ENCODE measurements at regions of chr11 and their contacts with region 1.

Region 1: GRCh38 chr11:20374746-20375300 is 11.3 kb downstream of the HTATIP2 start:
- DNase-seq: no peak
- H3K4me3 ChIP-seq: no peak overlapping the region
- H3K27ac ChIP-seq: no peak overlapping the region
- H3K4me1 ChIP-seq: no peaks in the 10 kb centered on the region
- H3K27me3 ChIP-seq: no peaks in the 10 kb centered on the region
- CTCF ChIP-seq: no peak
- EP300 ChIP-seq: no peak
- RAD21 ChIP-seq: no peak

Region 2: DNA sequence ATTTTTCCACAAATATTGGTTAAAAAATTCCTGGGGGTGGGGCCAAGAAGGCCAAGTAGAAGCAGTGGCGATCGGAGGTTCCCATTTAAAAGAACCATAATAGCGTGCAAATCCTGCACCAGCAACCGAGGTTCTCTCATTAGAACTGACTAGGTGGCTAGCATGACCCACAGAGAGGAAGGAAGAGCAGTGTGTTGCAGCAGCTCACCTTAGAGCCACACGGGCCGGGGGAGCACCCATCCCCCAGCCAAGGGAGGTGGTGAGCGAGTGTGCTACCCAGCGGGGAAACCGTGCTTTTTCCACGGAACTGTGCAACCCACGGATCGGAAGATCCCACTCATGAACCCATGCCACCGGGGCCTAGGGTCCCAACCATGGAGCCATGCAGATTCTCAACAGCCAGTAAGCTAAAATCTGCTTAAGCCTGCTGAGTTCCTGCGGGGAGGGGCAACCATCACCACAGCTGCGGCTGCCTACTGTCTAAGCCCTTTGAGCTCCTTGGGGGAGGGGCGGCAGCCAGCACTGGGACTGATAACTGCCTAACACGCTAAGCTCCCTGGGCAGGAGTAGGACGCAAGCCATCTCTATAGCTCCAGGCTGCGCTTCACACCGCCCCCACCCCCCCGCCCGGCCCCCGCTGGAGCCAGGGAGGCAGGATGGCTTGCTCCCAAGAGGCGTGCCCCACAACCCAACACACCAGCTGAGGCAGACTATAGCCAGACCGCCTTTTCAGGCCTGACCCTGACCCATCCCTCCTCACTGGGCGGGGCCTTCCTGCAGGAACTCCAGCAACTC is 32.3 kb before region 1 on chr11:
- CTCF ChIA-PET with region 1: no interaction called
- POLR2A ChIA-PET with region 1: no interaction called
- DNase-seq: no peak
- H3K4me3 ChIP-seq: no peak overlapping the region
- H3K27ac ChIP-seq: no peak overlapping the region
- H3K4me1 ChIP-seq: peaks cover 0 to 3% of the 10 kb centered on the region in 2 experiments; a peak in 1 of 4 replicates
- H3K27me3 ChIP-seq: peaks cover 4% of the 10 kb centered on the region; the same call in 1 of the 2 replicates
- CTCF ChIP-seq: no peak
- EP300 ChIP-seq: no peak
- RAD21 ChIP-seq: no peak

Region 3: GRCh38 chr11:20387241-20388095 is 12.6 kb after region 1 on chr11 and contains the start of gene PRMT3:
- CTCF ChIA-PET with region 1: interaction called, 10 read pairs
- POLR2A ChIA-PET with region 1: no interaction called
- DNase-seq: peak; percentile 97
- H3K4me3 ChIP-seq: peak within 1 kb of the TSS; percentile 91 to 93
- H3K27ac ChIP-seq: peak within 1 kb of the TSS; percentile 88 to 94
- H3K4me1 ChIP-seq: peaks cover 5 to 6% of the 10 kb centered on the region in 2 experiments; a peak in 2 of 4 replicates
- H3K27me3 ChIP-seq: no peaks in the 10 kb centered on the region
- CTCF ChIP-seq: peak; percentile 99
- EP300 ChIP-seq: 0 out of 4 replicates have a peak, but pooled peaks of 1 of the 2 experiments have one; percentile 32
- RAD21 ChIP-seq: peak; percentile 62
- polyA plus RNA-seq, gene PRMT3: 10.8 and 14.9 TPM in 2 replicates